Endothelial cell of umbilical vein (primary cell): ENCODE measurements at regions of chr3 and their contacts with region 1.

Region 1: DNA sequence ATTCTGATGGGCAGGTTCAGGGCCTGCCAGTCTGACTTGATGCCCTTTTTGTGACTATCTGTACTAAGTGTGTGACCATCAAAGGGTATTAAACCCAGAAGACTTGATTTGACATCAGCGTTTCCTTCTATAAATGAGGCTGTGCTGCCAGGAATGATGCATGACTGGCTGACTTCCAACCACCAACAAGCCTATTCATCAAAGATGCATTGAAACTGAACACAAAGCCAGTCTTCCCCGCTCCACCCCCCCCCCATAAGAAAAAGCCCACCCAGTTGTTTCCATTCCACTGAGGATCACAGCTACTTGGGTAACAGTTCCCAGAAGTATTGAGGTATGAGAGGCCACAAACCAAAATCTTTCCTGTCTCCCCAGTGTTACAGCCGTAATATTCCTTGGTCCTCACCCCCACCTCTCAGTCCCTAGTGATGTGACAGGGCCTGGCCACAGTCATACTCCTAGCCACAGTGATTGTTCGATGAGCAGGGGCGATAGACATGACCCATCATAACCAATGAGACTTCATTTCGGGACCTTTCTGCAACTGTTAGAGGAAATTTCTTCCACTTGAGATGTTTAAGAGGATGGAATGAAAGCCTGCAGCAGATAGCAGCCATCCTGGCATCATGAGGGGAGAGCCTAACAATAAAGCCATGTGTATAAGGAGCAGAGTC is 22.6 kb downstream of the SH3BP5 start:
- DNase-seq: peak; percentile 85
- H3K4me3 ChIP-seq: no peak overlapping the region
- H3K27ac ChIP-seq: peak overlapping the region; percentile 44
- H3K4me1 ChIP-seq: peaks cover 28% of the 10 kb centered on the region
- H3K27me3 ChIP-seq: no peaks in the 10 kb centered on the region
- CTCF ChIP-seq: no peak
- POLR2A ChIP-seq: no peak

Region 2: DNA sequence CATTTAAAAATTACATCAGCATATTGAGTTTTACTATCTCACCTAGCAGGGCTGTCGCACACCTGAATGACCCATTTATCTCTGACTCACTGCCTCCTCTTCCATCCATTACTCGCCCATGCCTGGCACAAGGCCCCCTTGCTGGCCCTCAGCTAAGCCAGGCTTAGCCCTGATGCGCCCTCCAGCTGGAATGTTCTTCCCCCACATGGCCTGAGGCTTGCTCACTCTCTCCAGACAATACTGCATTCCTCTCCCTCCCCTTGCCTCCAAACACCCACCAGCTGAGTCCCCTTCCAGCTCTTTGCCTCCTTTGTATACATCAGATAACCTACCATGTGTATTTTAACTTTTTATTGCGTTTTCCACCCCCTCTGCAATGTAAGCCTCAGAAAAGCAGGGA is 15.4 kb after region 1 on chr3:
- CTCF ChIA-PET with region 1: interaction called, 12 read pairs
- POLR2A ChIA-PET with region 1: interaction called, 4 read pairs
- dilution Hi-C with region 1: no loop called
- intact Hi-C with region 1: loop called (anchors 1 kb)
- DNase-seq: peak; percentile 37
- H3K4me3 ChIP-seq: no peak overlapping the region
- H3K27ac ChIP-seq: no peak overlapping the region
- H3K4me1 ChIP-seq: peaks cover 54% of the 10 kb centered on the region
- H3K27me3 ChIP-seq: no peaks in the 10 kb centered on the region
- CTCF ChIP-seq: no peak
- POLR2A ChIP-seq: no peak